Adrenal gland (tissue), 19 donors: ENCODE measurements at regions of chr10 and their contacts with region 1.

Region 1: GRCh38 chr10:79068562-79069324 is at the start of gene ZMIZ1:
- DNase-seq: peak; percentile 90 to 97 (median 93)
- H3K4me3 ChIP-seq: peak within 1 kb of the TSS; percentile 77 to 99 (median 82)
- H3K27ac ChIP-seq: peak within 1 kb of the TSS; percentile 74 to 99 (median 91)
- H3K4me1 ChIP-seq: peaks cover 32% of the 10 kb centered on the region in 2 donors
- H3K27me3 ChIP-seq: no peaks in the 10 kb centered on the region
- CTCF ChIP-seq: peak in 3 of 6 experiments; percentile 29 to 40 (median 30)
- POLR2A ChIP-seq: peak; percentile 93 to 96
- total RNA-seq, gene ZMIZ1: 6.6 to 113 (median 56.4) TPM

Region 2: GRCh38 chr10:78972947-78973900 is 95.5 kb before region 1 on chr10:
- intact Hi-C with region 1: loop called in 1 of 2 experiments (anchors 10 kb)
- DNase-seq: peak; percentile 81 to 95 (median 89)
- H3K4me3 ChIP-seq: peak overlapping the region in 3 of 4 donors; percentile 4 to 52 (median 23)
- H3K27ac ChIP-seq: peak overlapping the region; percentile 92 to 100 (median 99)
- H3K4me1 ChIP-seq: peaks cover 43% of the 10 kb centered on the region in 2 donors
- H3K27me3 ChIP-seq: no peaks in the 10 kb centered on the region
- CTCF ChIP-seq: peak in 3 of 6 experiments; percentile 12 to 25 (median 14)
- POLR2A ChIP-seq: peak; percentile 73 to 85

Region 3: GRCh38 chr10:79007421-79008319 is 61.1 kb before region 1 on chr10:
- intact Hi-C with region 1: loop called in 1 of 2 experiments (anchors 10 kb)
- DNase-seq: peak in 4 of 7 donors; percentile 33 to 65 (median 50)
- H3K4me3 ChIP-seq: no peak overlapping the region
- H3K27ac ChIP-seq: peak overlapping the region in 1 of 5 donors; percentile 45
- H3K4me1 ChIP-seq: peaks cover 0 to 24% of the 10 kb centered on the region in 2 donors
- H3K27me3 ChIP-seq: no peaks in the 10 kb centered on the region
- CTCF ChIP-seq: no peak
- POLR2A ChIP-seq: no peak